AG04450 (cell line): ENCODE measurements at regions of chr1 and their contacts with region 1.

Region 1: DNA sequence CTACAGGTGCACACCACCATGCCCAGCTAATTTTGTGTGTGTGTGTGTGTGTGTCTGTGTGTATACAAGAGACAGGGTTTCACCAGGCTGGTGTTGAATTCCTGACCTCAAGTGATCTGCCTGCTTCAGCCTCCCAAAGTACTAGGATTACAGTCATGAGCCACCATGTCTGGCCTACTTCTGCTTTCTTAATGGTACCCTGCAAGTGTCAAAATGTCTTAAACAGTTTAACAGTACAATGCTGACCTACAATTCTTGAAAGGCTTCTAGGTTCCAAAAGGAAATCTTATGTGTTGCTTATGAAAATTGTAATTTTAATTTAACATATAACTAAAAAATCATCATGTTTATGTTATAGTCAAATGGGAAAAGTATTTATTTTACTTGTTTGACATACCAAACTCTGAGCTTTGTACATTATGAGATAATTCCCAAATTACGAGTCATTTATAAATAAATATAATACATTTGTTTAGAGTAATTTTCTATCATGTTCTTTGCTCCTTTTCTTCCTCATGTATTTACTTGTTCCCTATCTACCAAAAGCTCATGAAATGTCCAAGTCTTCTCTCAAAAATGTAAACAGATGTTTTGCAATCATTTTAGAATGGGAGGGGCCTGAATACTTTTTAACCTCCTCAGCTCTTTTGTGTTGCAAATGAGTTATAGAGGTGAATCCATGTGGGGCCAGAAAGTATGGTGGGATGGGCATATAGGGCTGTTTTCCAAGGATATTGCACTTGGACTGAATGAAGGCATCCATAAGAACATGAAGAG is 8.4 kb upstream of the VCAM1 start:
- DNase-seq: peak; percentile 44
- H3K4me3 ChIP-seq: no peak overlapping the region
- H3K27ac ChIP-seq: no peak overlapping the region
- H3K27me3 ChIP-seq: no peaks in the 10 kb centered on the region
- CTCF ChIP-seq: no peak

Region 2: GRCh38 chr1:100721536-100722207 is 10.6 kb after region 1 on chr1:
- CTCF ChIA-PET with region 1: no interaction called
- POLR2A ChIA-PET with region 1: interaction called, 11 read pairs
- DNase-seq: peak; percentile 94
- H3K4me3 ChIP-seq: peak overlapping the region; percentile 50
- H3K27ac ChIP-seq: peak overlapping the region; percentile 55
- H3K27me3 ChIP-seq: no peaks in the 10 kb centered on the region
- CTCF ChIP-seq: no peak